Activated naive CD4-positive, alpha-beta T cell treated with anti-CD3 and anti-CD28 coated beads, Interleukin-2, amount 10 ng/mL, durations not matched to agents 7 days and 5 days (primary cell): ENCODE measurements at regions of chr14 and their contacts with region 1.

Region 1: GRCh38 chr14:49633640-49634546 is 1.2 kb downstream of the DNAAF2 start:
- DNase-seq: peak; percentile 96
- H3K4me3 Mint-ChIP-seq: peak overlapping the region; percentile 90
- H3K27ac Mint-ChIP-seq: peak overlapping the region; percentile 95
- H3K4me1 Mint-ChIP-seq: peaks cover 59% of the 10 kb centered on the region
- H3K27me3 Mint-ChIP-seq: no peaks in the 10 kb centered on the region

Region 2: DNA sequence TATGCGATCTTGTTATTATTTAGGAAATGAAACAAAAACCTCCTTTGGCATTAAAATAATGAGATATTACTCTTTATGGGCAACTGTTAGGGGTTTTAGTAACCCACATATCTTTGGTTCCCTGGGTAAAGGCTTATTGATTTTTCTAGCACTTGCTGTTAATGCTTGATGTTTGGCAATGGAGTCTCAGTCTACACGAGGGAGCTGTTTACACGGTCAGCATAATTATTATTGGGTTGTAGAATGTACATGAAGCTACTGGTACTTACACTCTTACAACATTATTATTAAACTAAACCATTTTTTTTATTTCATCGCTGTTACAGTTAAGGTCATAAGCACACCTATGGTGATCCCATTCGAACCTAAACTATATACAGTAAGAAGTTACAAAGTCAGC is 59.9 kb before region 1 on chr14:
- CTCF ChIA-PET with region 1: no interaction called
- DNase-seq: no peak
- H3K4me3 Mint-ChIP-seq: no peak overlapping the region
- H3K27ac Mint-ChIP-seq: no peak overlapping the region
- H3K4me1 Mint-ChIP-seq: peaks cover 4% of the 10 kb centered on the region
- H3K27me3 Mint-ChIP-seq: no peaks in the 10 kb centered on the region

Region 3: GRCh38 chr14:49585803-49586672 is 47.9 kb before region 1 on chr14 and contains the start of gene RPS29:
- CTCF ChIA-PET with region 1: interaction called, 14 read pairs
- DNase-seq: peak; percentile 99
- H3K4me3 Mint-ChIP-seq: peak within 1 kb of the TSS; percentile 89
- H3K27ac Mint-ChIP-seq: peak within 1 kb of the TSS; percentile 99
- H3K4me1 Mint-ChIP-seq: peaks cover 48% of the 10 kb centered on the region
- H3K27me3 Mint-ChIP-seq: peaks cover 4% of the 10 kb centered on the region

Region 4: DNA sequence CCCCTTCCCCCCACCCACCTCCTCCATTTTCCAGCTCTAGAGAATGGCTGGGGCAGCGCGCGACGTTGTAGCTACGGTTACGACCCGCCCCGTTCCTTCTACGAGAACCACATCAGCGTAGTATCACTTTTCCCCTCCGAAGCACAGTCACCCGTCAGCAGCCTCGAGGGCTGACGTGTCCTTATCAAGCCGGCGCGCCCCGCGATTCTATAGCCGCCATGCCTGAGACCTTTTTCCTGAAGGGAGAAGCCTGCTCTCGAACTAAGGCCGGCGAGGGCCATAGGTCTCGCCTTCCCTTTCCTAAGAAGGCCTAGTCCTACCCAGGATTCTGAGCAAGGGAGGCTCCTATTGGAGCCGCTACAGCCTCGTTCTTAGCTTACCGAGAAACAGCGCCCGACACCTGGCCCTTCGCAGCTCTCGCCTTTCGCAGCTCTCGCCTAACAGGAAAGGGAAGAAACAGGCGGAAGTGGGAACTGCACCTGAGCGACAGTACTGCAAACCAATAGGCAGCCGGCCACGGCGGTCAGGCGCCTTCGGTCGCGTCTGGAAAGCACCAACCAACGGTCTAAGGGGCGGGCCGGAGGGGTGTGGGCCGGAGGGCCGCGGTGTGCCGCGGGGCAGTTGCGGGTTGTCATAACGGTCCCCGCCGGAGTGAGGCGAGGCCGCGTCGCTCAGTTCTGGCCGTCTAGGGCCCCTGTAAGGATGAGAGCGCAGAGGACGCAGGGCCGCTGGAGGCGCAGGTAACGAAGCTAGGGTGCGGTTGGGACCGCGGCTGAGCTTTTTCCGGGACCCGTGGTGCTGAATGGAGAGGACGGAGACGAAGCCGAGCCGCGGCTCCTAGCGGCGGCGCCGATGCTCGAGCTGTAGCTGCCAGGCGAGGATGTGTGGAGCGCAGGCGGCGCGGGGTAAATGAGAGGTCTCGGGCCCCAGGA is 13.4 kb before region 1 on chr14 and contains the starts of genes MGAT2 and RPL36AL:
- CTCF ChIA-PET with region 1: interaction called, 27 read pairs
- DNase-seq: peak; percentile 97
- H3K4me3 Mint-ChIP-seq: peak within 1 kb of the TSS; percentile 99
- H3K27ac Mint-ChIP-seq: peak within 1 kb of the TSS; percentile 99
- H3K4me1 Mint-ChIP-seq: peaks cover 64% of the 10 kb centered on the region
- H3K27me3 Mint-ChIP-seq: no peaks in the 10 kb centered on the region

Region 5: DNA sequence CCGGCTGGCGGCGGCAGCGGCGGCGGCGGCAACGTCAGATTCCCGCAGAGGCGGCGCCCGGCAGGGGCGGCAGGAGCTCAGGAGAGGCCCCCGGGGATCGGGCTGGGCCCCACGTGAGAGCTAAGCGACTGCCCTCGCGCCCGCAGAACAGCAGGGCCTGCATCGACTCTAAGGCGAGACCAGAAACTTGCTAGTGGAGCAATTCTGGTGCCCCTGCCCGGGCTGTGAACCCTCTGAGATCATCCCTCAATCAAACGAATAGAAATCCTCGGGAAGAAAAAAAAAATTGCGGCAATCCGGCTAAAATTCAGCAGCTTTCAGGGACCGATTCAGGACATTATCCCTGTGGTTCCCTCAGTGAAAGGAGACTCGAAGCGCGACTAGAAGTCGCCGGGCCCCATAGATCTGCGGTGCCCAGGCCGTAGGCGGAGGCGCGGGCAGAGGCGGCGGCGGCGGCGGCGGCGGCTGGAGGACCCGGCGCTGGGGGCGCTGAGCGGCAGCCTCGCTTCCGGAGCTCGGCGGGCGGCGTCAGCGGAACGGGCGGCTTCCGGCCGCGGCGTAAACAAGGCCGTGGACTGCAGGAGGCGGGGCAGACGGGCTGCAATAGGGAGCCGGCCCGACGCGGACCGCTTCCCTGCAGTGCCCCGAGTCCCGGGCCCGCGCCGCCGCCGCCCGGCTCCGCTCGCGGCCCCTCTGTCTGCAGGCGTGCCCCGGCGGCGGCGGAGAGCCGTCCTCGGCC is 133.8 kb after region 1 on chr14 and contains the start of gene KLHDC2:
- CTCF ChIA-PET with region 1: interaction called, 15 read pairs
- DNase-seq: peak; percentile 92
- H3K4me3 Mint-ChIP-seq: peak within 1 kb of the TSS; percentile 98
- H3K27ac Mint-ChIP-seq: peak within 1 kb of the TSS; percentile 100
- H3K4me1 Mint-ChIP-seq: peaks cover 36% of the 10 kb centered on the region
- H3K27me3 Mint-ChIP-seq: no peaks in the 10 kb centered on the region

Region 6: GRCh38 chr14:49828640-49829039 is 194.7 kb after region 1 on chr14:
- CTCF ChIA-PET with region 1: interaction called, 23 read pairs
- DNase-seq: no peak
- H3K4me3 Mint-ChIP-seq: no peak overlapping the region
- H3K27ac Mint-ChIP-seq: no peak overlapping the region
- H3K4me1 Mint-ChIP-seq: no peaks in the 10 kb centered on the region
- H3K27me3 Mint-ChIP-seq: no peaks in the 10 kb centered on the region

Region 7: GRCh38 chr14:49852301-49853157 is 218.6 kb after region 1 on chr14 and contains the start of gene NEMF:
- CTCF ChIA-PET with region 1: interaction called, 17 read pairs
- DNase-seq: peak; percentile 83
- H3K4me3 Mint-ChIP-seq: peak within 1 kb of the TSS; percentile 98
- H3K27ac Mint-ChIP-seq: peak within 1 kb of the TSS; percentile 96
- H3K4me1 Mint-ChIP-seq: peaks cover 51% of the 10 kb centered on the region
- H3K27me3 Mint-ChIP-seq: no peaks in the 10 kb centered on the region